ENCODE measurements at regions of chr11 and their contacts with region 1.

Region 1: DNA sequence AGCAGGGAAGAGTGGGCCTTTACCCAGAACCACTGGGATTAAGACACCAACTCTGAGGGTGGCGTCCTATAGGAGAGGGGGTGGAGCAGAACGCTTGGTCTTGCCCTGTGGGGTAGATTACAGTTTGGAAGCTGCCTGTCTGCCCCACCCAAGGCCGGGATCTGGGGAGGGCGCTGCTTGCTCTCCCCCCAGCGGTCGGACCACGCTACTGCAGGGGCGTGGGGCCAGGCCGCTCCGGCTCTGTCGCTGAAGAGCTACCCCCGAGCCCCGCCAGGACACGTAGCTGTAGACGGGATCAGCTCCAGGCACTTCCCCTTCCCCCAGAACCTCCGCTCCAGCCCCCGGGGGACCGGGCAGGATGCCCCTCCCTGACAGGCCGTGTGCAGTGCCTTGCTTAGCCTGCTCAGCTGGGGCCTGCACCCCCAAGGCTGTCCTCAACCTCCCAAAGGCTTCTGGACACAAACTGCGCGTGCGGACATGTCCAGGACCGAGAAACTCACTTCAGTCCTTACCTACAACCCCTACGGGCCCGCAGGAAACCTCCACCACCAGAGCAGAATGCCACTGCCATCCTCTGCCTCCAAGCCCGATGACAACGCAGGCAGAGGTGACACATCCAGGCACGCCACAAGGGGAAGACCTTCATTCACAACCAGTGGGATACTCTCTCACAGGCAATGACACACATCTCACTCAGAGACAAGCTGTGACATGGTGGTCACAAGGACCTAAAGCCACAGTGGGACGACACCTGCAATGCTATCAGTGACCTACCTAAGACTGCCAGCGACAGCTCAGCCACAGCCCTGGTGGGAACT is 3.6 kb downstream of the AHNAK start:
- DNase-seq: peak; percentile 54
- ATAC-seq: peak; percentile 47
- H3K4me3 ChIP-seq: peak overlapping the region; percentile 91 to 98
- H3K27ac ChIP-seq: peak overlapping the region; percentile 95
- H3K4me1 ChIP-seq: peaks cover 69 to 84% of the 10 kb centered on the region in 2 experiments
- H3K27me3 ChIP-seq: no peaks in the 10 kb centered on the region
- CTCF ChIP-seq: peak in 2 of 3 experiments; percentile 95 to 99; a peak in 4 of 6 replicates
- POLR2A ChIP-seq: no peak
- RAD21 ChIP-seq: no peak

Region 2: GRCh38 chr11:62394825-62395538 is 148.0 kb before region 1 on chr11:
- CTCF ChIA-PET with region 1: interaction called, 35 read pairs
- POLR2A ChIA-PET with region 1: interaction called, 7 read pairs
- RAD21 ChIA-PET with region 1: interaction called, 4 to 13 read pairs
- intact Hi-C with region 1: no loop called
- DNase-seq: peak; percentile 61
- ATAC-seq: peak; percentile 82
- H3K4me3 ChIP-seq: no peak overlapping the region; a peak in 1 of 4 replicates
- H3K27ac ChIP-seq: no peak overlapping the region
- H3K4me1 ChIP-seq: peaks cover 9 to 21% of the 10 kb centered on the region in 2 experiments; a peak in 3 of 4 replicates
- H3K27me3 ChIP-seq: no peaks in the 10 kb centered on the region
- CTCF ChIP-seq: peak; percentile 58 to 85 (median 81)
- POLR2A ChIP-seq: no peak
- RAD21 ChIP-seq: peak; percentile 95

Region 3: DNA sequence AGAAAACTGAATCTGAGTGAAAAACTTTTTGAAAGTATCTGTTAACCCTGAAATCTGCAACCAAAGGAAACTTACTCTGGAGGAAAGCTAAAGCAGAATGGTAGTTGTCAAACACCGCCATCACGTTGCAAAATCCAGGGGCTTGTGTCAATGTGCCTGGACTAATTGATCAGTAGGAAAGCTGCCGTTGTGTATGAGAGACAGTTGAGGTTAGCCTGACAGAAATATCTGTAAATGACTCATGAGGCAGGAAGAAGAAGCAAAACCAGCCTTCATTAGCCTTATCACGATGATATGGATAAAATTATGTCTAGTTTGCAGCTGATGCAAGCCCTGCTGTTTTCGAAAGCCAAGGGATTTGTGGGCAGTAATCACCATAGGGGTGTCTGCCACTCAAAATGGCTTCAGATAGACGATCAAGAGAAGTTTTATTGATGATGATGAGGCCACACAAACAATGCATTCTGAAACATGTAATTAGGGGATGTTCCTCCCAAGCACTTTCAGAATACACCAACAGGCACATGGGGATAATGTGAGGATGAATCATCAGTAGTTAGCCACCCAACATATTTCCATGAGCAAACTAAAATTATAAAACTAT is 115.2 kb before region 1 on chr11:
- CTCF ChIA-PET with region 1: interaction called, 62 read pairs
- POLR2A ChIA-PET with region 1: interaction called, 22 read pairs
- RAD21 ChIA-PET with region 1: interaction called, 13 to 27 read pairs
- intact Hi-C with region 1: loop called (anchors 1 kb)
- DNase-seq: no peak
- ATAC-seq: no peak
- H3K4me3 ChIP-seq: no peak overlapping the region
- H3K27ac ChIP-seq: no peak overlapping the region
- H3K4me1 ChIP-seq: peaks cover 0 to 29% of the 10 kb centered on the region in 2 experiments; a peak in 2 of 4 replicates
- H3K27me3 ChIP-seq: no peaks in the 10 kb centered on the region
- CTCF ChIP-seq: no peak
- POLR2A ChIP-seq: no peak
- RAD21 ChIP-seq: no peak

Region 4: GRCh38 chr11:62472012-62472884 is 70.7 kb before region 1 on chr11:
- CTCF ChIA-PET with region 1: no interaction called
- POLR2A ChIA-PET with region 1: no interaction called
- RAD21 ChIA-PET with region 1: no interaction called
- intact Hi-C with region 1: no loop called
- DNase-seq: peak; percentile 59
- ATAC-seq: peak; percentile 93
- H3K4me3 ChIP-seq: peak overlapping the region in 1 of 2 experiments; percentile 47; a peak in 3 of 4 replicates
- H3K27ac ChIP-seq: peak overlapping the region; percentile 65
- H3K4me1 ChIP-seq: peaks cover 23 to 39% of the 10 kb centered on the region in 2 experiments
- H3K27me3 ChIP-seq: no peaks in the 10 kb centered on the region
- CTCF ChIP-seq: no peak
- POLR2A ChIP-seq: no peak
- RAD21 ChIP-seq: no peak

Region 5: GRCh38 chr11:62497132-62497915 is 45.6 kb before region 1 on chr11:
- CTCF ChIA-PET with region 1: interaction called, 18 read pairs
- POLR2A ChIA-PET with region 1: interaction called, 11 read pairs
- RAD21 ChIA-PET with region 1: interaction called, 7 to 8 read pairs
- intact Hi-C with region 1: loop called (anchors 1 kb)
- DNase-seq: peak; percentile 74
- ATAC-seq: peak; percentile 77
- H3K4me3 ChIP-seq: no peak overlapping the region
- H3K27ac ChIP-seq: peak overlapping the region; percentile 16; the same call in 1 of the 2 replicates
- H3K4me1 ChIP-seq: peaks cover 31 to 43% of the 10 kb centered on the region in 2 experiments
- H3K27me3 ChIP-seq: no peaks in the 10 kb centered on the region
- CTCF ChIP-seq: peak; percentile 60 to 78 (median 69)
- POLR2A ChIP-seq: no peak
- RAD21 ChIP-seq: peak; percentile 94

Region 6: DNA sequence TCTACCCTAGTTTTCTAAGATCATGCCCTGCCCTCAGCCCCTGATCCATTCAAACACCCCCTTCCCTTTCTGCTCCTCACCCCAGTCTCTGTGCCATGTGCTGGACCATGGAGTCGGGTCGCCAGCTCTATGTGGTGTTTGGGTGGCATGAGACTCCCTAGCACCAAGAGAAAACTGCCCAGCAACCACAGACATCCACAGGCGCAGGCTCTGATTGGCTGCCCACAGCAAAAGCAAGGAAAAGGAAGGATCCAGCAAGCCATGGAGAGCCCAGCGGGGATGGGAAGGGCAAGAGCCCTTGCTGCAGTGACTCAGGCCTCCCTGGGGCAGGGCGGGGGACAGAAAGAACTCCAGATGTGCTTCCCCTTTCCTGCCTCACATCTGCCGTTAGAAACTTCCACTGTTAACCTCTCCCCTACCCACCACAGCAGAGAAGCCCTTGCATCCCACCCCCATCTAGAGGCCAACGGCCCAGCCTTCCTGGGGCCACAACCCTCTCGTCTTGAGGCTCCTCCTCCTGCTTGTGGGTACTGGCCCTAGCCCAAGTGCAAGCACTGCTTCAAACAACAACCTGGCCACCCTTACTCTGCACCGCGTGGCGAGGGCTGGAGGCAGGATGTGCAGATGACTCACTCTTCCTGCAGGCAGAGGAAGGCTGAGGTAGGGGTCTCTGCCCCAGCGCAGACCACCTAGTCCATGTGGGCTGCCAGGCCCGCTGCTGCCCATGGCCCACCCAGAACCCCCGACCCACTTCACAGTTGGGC is 13.3 kb after region 1 on chr11:
- CTCF ChIA-PET with region 1: interaction called, 39 read pairs
- POLR2A ChIA-PET with region 1: interaction called, 16 read pairs
- RAD21 ChIA-PET with region 1: interaction called, 7 to 11 read pairs
- intact Hi-C with region 1: no loop called
- DNase-seq: peak; percentile 93
- ATAC-seq: peak; percentile 60
- H3K4me3 ChIP-seq: peak overlapping the region; percentile 33 to 36
- H3K27ac ChIP-seq: peak overlapping the region; percentile 99
- H3K4me1 ChIP-seq: peaks cover 90 to 100% of the 10 kb centered on the region in 2 experiments
- H3K27me3 ChIP-seq: no peaks in the 10 kb centered on the region
- CTCF ChIP-seq: no peak
- POLR2A ChIP-seq: peak; percentile 21
- RAD21 ChIP-seq: no peak